ENCODE measurements at regions of chr1 and their contacts with region 1.

Region 1: GRCh38 chr1:183635606-183636333 is at the start of gene ARPC5:
- DNase-seq: peak; percentile 90 to 98 (median 92)
- ATAC-seq: peak; percentile 92
- H3K4me3 ChIP-seq: peak within 1 kb of the TSS; percentile 94
- H3K4me3 Mint-ChIP-seq: peak within 1 kb of the TSS; percentile 95 to 100 (median 100)
- H3K27ac ChIP-seq: peak within 1 kb of the TSS; percentile 80
- H3K27ac Mint-ChIP-seq: peak within 1 kb of the TSS; percentile 94 to 100 (median 99)
- H3K4me1 ChIP-seq: peaks cover 14 to 22% of the 10 kb centered on the region in 2 donors
- H3K4me1 Mint-ChIP-seq: peaks cover 15 to 50% (median 39%) of the 10 kb centered on the region in 7 donors
- H3K27me3 ChIP-seq: no peaks in the 10 kb centered on the region
- H3K27me3 Mint-ChIP-seq: peaks cover 0 to 27% (median 0%) of the 10 kb centered on the region in 5 donors
- total RNA-seq, gene ARPC5: 49.9 to 252 (median 105) TPM

Region 2: GRCh38 chr1:182029379-182030331 is 1606.1 kb before region 1 on chr1:
- CTCF ChIA-PET with region 1: no interaction called
- POLR2A ChIA-PET with region 1: no interaction called
- intact Hi-C with region 1: loop called in 1 of 2 experiments (anchors 5 kb)
- DNase-seq: peak; percentile 95 to 98 (median 98)
- ATAC-seq: peak; percentile 97
- H3K4me3 ChIP-seq: peak overlapping the region; percentile 72
- H3K4me3 Mint-ChIP-seq: peak overlapping the region; percentile 90 to 100 (median 96)
- H3K27ac ChIP-seq: peak overlapping the region; percentile 87
- H3K27ac Mint-ChIP-seq: peak overlapping the region; percentile 94 to 100 (median 99)
- H3K4me1 ChIP-seq: peaks cover 9 to 14% of the 10 kb centered on the region in 2 donors
- H3K4me1 Mint-ChIP-seq: peaks cover 12 to 21% (median 18%) of the 10 kb centered on the region in 7 donors
- H3K27me3 ChIP-seq: no peaks in the 10 kb centered on the region
- H3K27me3 Mint-ChIP-seq: peaks cover 0 to 6% (median 0%) of the 10 kb centered on the region in 5 donors

Region 3: GRCh38 chr1:182789138-182790076 is 846.4 kb before region 1 on chr1 and contains the start of gene NPL:
- CTCF ChIA-PET with region 1: no interaction called
- POLR2A ChIA-PET with region 1: no interaction called
- intact Hi-C with region 1: loop called in 1 of 2 experiments (anchors 2 kb)
- DNase-seq: peak; percentile 78 to 88 (median 86)
- ATAC-seq: peak; percentile 97
- H3K4me3 ChIP-seq: peak within 1 kb of the TSS; percentile 94
- H3K4me3 Mint-ChIP-seq: peak within 1 kb of the TSS; percentile 88 to 96 (median 94)
- H3K27ac ChIP-seq: peak within 1 kb of the TSS; percentile 68
- H3K27ac Mint-ChIP-seq: peak within 1 kb of the TSS; percentile 45 to 94 (median 87)
- H3K4me1 ChIP-seq: peaks cover 8 to 13% of the 10 kb centered on the region in 2 donors
- H3K4me1 Mint-ChIP-seq: peaks cover 8 to 18% (median 15%) of the 10 kb centered on the region in 7 donors
- H3K27me3 ChIP-seq: no peaks in the 10 kb centered on the region
- H3K27me3 Mint-ChIP-seq: peaks cover 0 to 38% (median 0%) of the 10 kb centered on the region in 5 donors
- total RNA-seq, gene NPL: 3.0 to 20.8 (median 9.9) TPM

Region 4: GRCh38 chr1:183590244-183591191 is 45.3 kb before region 1 on chr1 and contains the start of gene NCF2:
- CTCF ChIA-PET with region 1: no interaction called
- POLR2A ChIA-PET with region 1: no interaction called
- intact Hi-C with region 1: loop called in 1 of 2 experiments (anchors 1 kb)
- DNase-seq: peak in 1 of 9 donors; percentile 46
- ATAC-seq: peak; percentile 90
- H3K4me3 ChIP-seq: no peak within 1 kb of the TSS
- H3K4me3 Mint-ChIP-seq: peak within 1 kb of the TSS in 5 of 10 donors; percentile 20 to 81 (median 25)
- H3K27ac ChIP-seq: no peak within 1 kb of the TSS
- H3K27ac Mint-ChIP-seq: peak within 1 kb of the TSS in 4 of 9 donors; percentile 36 to 87 (median 64)
- H3K4me1 ChIP-seq: peaks cover 3 to 9% of the 10 kb centered on the region in 2 donors
- H3K4me1 Mint-ChIP-seq: peaks cover 0 to 44% (median 19%) of the 10 kb centered on the region in 7 donors
- H3K27me3 ChIP-seq: no peaks in the 10 kb centered on the region
- H3K27me3 Mint-ChIP-seq: peaks cover 0 to 5% (median 0%) of the 10 kb centered on the region in 5 donors
- total RNA-seq, gene NCF2: 2.2 to 145 (median 15.2) TPM

Region 5: DNA sequence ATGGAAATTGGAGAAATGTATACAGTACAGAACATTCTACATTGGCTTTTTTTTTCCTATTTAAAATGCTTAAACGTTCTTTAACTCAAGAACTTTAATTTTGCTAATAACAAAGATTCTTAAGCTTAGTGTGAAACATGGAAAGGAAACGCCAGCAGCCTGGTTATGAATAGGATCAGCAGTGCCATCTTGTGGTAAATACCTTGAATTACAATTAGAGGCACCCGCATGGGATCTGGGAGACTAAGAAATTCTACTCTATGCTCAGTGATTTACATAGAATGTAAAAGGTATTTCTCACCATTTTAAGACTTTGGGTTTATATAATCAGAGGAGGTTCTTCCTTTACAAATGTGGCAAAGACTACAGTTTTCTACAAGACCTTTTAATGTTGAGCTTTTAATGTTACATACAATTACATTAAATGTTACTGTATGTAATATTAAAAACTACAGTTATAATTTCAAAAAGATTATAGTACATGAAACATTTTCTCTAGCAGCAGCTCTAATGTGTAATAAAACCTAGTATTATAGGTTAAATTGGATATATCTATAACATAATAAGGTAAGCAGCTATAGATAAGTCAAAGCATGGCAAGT is 49.4 kb after region 1 on chr1:
- CTCF ChIA-PET with region 1: no interaction called
- POLR2A ChIA-PET with region 1: no interaction called
- intact Hi-C with region 1: loop called (anchors 1 kb)
- DNase-seq: peak in 7 of 9 donors; percentile 20 to 63 (median 54)
- ATAC-seq: peak; percentile 86
- H3K4me3 ChIP-seq: no peak overlapping the region
- H3K4me3 Mint-ChIP-seq: no peak overlapping the region
- H3K27ac ChIP-seq: no peak overlapping the region
- H3K27ac Mint-ChIP-seq: no peak overlapping the region
- H3K4me1 ChIP-seq: no peaks in the 10 kb centered on the region
- H3K4me1 Mint-ChIP-seq: peaks cover 0 to 4% (median 0%) of the 10 kb centered on the region in 7 donors
- H3K27me3 ChIP-seq: no peaks in the 10 kb centered on the region
- H3K27me3 Mint-ChIP-seq: peaks cover 0 to 30% (median 0%) of the 10 kb centered on the region in 5 donors

Region 6: DNA sequence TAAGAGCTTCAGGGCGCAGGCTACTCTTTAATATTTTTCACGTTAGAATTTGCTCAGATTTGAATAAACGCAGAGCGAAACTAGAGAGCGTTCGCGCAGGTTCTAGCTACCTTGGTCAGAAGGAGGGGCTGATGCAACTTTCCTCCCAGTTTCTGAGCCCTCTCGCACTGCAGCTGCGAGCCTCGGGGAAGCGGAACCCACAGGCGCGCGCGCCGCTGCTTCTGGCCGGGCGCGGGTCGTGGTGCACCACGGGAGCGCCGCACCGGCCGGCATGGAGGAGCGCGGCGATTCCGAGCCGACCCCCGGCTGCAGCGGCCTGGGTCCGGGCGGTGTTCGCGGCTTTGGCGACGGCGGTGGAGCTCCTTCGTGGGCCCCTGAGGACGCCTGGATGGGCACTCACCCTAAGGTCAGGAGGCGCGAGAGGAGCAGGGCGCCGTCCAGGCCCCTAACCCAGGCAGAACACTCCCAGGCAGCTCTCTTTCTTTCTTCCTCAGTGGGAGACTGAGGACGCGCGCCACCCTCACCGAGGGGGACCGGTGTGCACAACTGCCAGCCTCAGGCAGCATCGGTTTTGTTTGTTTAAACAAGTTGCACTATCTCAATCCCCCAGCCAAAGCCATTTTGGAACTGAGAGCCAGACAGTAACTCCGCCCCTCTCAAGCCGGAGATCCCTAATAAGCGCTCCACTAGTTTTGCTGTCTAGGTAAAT is 415.9 kb after region 1 on chr1 and contains the start of gene TSEN15:
- CTCF ChIA-PET with region 1: no interaction called
- POLR2A ChIA-PET with region 1: no interaction called
- intact Hi-C with region 1: loop called (anchors 1 to 2 kb)
- DNase-seq: peak; percentile 54 to 75 (median 68)
- ATAC-seq: peak; percentile 98
- H3K4me3 ChIP-seq: peak within 1 kb of the TSS; percentile 87
- H3K4me3 Mint-ChIP-seq: peak within 1 kb of the TSS; percentile 91 to 99 (median 98)
- H3K27ac ChIP-seq: peak within 1 kb of the TSS; percentile 77
- H3K27ac Mint-ChIP-seq: peak within 1 kb of the TSS; percentile 89 to 99 (median 95)
- H3K4me1 ChIP-seq: peaks cover 19 to 23% of the 10 kb centered on the region in 2 donors
- H3K4me1 Mint-ChIP-seq: peaks cover 18 to 56% (median 45%) of the 10 kb centered on the region in 7 donors
- H3K27me3 ChIP-seq: peaks cover 0 to 3% of the 10 kb centered on the region in 2 donors
- H3K27me3 Mint-ChIP-seq: peaks cover 13 to 33% (median 20%) of the 10 kb centered on the region in 5 donors
- total RNA-seq, gene TSEN15: 12.7 to 48.9 (median 31.1) TPM

Region 7: GRCh38 chr1:184289825-184290550 is 654.2 kb after region 1 on chr1:
- CTCF ChIA-PET with region 1: no interaction called
- POLR2A ChIA-PET with region 1: no interaction called
- intact Hi-C with region 1: no loop called
- DNase-seq: peak in 2 of 9 donors; percentile 1 to 2
- ATAC-seq: no peak
- H3K4me3 ChIP-seq: no peak overlapping the region
- H3K4me3 Mint-ChIP-seq: no peak overlapping the region
- H3K27ac ChIP-seq: no peak overlapping the region
- H3K27ac Mint-ChIP-seq: no peak overlapping the region
- H3K4me1 ChIP-seq: no peaks in the 10 kb centered on the region
- H3K4me1 Mint-ChIP-seq: no peaks in the 10 kb centered on the region
- H3K27me3 ChIP-seq: no peaks in the 10 kb centered on the region
- H3K27me3 Mint-ChIP-seq: peaks cover 0 to 6% (median 2%) of the 10 kb centered on the region in 5 donors

Region 8: DNA sequence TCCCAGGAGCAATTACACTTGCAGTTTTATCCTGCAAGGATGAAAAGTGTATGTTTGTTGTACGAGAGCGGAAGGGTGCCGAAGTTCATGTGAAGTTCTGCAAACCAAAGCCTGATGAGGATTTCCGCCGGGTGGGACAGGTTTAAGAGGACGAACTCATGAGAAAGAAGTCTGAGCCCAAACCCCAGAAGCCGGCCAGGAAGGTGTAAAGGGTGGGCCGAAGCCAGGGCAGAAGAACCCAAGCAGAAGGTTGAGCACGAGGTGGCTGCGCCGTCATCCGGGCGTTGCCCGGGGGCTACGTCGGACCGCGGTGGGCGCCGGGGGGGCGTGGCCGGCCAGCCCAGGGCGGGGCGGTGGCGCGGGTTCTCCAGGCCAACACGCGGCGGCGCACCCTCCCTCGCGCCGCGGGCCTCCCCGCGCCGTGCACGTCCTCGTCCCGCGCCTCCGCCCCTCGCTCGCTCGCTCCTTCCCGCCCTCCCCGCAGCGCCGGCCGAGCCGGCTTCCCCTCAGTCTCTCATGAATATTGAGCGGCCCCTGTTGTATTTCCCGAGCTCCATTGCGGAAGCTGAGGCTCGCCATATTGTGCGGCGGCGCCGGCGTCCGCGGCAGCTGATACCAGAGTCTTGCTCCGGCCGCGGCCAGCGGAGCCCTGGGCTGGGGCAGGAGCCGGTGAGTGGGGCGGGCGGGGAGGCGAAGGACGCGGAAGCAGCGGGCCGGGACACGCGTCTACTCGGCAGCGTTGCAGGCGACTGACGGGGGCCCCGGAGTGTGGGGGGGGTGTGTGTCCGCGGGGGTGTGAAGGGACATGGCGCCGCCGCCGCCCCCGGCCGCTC is 1409.4 kb after region 1 on chr1 and contains the start of gene RNF2:
- CTCF ChIA-PET with region 1: no interaction called
- POLR2A ChIA-PET with region 1: no interaction called
- intact Hi-C with region 1: loop called in 1 of 2 experiments (anchors 5 kb)
- DNase-seq: peak; percentile 64 to 80 (median 77)
- ATAC-seq: peak; percentile 95
- H3K4me3 ChIP-seq: peak within 1 kb of the TSS; percentile 74
- H3K4me3 Mint-ChIP-seq: peak within 1 kb of the TSS; percentile 87 to 96 (median 92)
- H3K27ac ChIP-seq: peak within 1 kb of the TSS; percentile 75
- H3K27ac Mint-ChIP-seq: peak within 1 kb of the TSS; percentile 69 to 96 (median 88)
- H3K4me1 ChIP-seq: peaks cover 11 to 15% of the 10 kb centered on the region in 2 donors
- H3K4me1 Mint-ChIP-seq: peaks cover 27 to 56% (median 45%) of the 10 kb centered on the region in 7 donors
- H3K27me3 ChIP-seq: no peaks in the 10 kb centered on the region
- H3K27me3 Mint-ChIP-seq: peaks cover 0 to 26% (median 0%) of the 10 kb centered on the region in 5 donors
- total RNA-seq, gene RNF2: 14.9 to 27.7 (median 19.6) TPM

Measured in naive thymus-derived CD4-positive, alpha-beta T cell (primary cell).